ENCODE measurements at regions of chr15 and their contacts with region 1.

Region 1: GRCh38 chr15:67863442-67863987 is 23.7 kb upstream of the RNU6-1 start:
- DNase-seq: peak; percentile 90
- H3K4me3 ChIP-seq: peak overlapping the region; percentile 40 to 50
- H3K27ac ChIP-seq: no peak overlapping the region
- H3K4me1 ChIP-seq: peaks cover 0 to 2% of the 10 kb centered on the region in 2 experiments; a peak in 1 of 4 replicates
- H3K27me3 ChIP-seq: no peaks in the 10 kb centered on the region
- CTCF ChIP-seq: peak; percentile 87
- EP300 ChIP-seq: no peak
- RAD21 ChIP-seq: peak; percentile 92

Region 2: GRCh38 chr15:67820992-67821783 is 42.3 kb before region 1 on chr15:
- CTCF ChIA-PET with region 1: no interaction called
- POLR2A ChIA-PET with region 1: no interaction called
- DNase-seq: no peak
- H3K4me3 ChIP-seq: no peak overlapping the region
- H3K27ac ChIP-seq: no peak overlapping the region
- H3K4me1 ChIP-seq: peaks cover 0 to 22% of the 10 kb centered on the region in 2 experiments; a peak in 2 of 4 replicates
- H3K27me3 ChIP-seq: peaks cover 36% of the 10 kb centered on the region
- CTCF ChIP-seq: no peak
- EP300 ChIP-seq: no peak
- RAD21 ChIP-seq: no peak

Region 3: DNA sequence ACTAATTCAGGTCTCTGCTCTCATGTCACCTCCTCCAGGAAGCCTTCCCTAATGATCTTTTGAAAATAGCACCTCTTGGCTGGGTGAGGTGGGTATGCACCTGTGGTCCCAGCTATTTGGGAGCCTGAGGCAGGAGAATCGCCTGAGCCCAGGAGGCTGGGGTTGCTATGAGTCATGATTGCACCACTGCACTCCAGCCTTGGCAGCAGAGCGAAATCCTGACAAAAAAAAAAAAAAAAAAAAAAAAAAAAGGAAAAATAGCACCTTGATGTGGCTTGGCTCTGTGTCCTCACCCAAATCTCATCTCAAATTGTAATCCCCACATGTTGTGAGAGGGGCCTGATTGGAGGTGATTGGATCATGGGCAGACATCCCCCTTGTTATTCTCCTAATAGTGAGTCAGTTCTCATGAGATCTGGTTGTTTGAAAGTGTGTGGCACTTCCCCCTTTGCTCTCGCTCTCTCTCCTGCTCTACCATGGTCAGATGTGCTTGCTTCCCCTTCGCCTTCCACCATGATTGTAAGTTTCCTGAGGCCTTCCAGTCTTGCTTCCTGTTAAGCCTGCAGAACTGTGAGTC is 12.4 kb before region 1 on chr15:
- CTCF ChIA-PET with region 1: interaction called, 31 read pairs
- POLR2A ChIA-PET with region 1: no interaction called
- DNase-seq: no peak
- H3K4me3 ChIP-seq: no peak overlapping the region
- H3K27ac ChIP-seq: no peak overlapping the region
- H3K4me1 ChIP-seq: peaks cover 0 to 6% of the 10 kb centered on the region in 2 experiments; a peak in 1 of 4 replicates
- H3K27me3 ChIP-seq: no peaks in the 10 kb centered on the region
- CTCF ChIP-seq: no peak
- EP300 ChIP-seq: no peak
- RAD21 ChIP-seq: no peak

Region 4: DNA sequence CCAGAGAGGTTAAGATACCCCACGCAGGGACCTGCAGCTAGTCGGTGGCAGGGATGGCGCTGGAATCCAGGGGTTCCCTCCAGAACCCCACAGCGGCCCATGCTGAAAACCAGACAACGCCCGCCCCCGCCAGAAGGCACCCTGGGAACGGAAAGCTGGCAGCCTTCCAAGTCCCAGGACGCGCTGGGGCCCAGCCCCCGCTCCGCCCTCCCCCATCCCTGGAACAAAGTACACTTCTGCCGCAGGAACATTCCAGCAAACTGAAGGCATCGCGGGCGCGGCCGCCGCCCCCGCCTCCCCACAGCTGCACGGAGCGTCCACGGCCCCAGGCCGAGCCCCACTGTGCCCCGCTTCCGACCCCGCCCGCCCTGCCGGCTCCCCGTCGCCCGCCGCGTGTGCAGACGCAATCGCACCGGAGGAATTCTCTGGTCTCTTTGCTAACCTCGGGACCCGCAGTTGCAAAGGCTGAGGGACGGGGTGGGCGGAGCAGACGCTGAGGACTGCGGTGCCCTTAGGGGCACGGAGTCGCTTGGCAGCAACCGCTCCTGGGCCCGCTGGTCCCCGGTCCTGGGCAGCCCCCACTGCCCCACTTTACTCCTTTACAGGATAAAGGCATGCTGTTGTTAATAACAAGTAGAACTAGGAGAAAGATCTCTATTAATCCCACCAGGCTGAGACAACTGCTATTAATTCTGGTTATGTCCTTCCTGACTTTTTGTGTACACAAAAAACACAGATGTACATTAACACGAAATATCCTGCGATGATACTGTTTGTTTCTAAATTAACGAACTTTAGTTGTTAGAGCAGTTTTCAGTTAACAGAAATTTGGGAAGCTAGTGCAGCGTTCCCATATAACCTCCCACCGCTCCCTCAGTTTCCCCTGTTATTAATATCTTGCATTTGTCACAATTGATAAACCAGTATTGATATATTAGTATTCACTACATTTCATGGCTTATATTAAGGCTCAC is 21.3 kb after region 1 on chr15:
- CTCF ChIA-PET with region 1: interaction called, 14 read pairs
- POLR2A ChIA-PET with region 1: interaction called, 3 read pairs
- DNase-seq: peak; percentile 88
- H3K4me3 ChIP-seq: peak overlapping the region; percentile 45 to 51
- H3K27ac ChIP-seq: peak overlapping the region in 1 of 2 experiments; percentile 80; a peak in 2 of 4 replicates
- H3K4me1 ChIP-seq: peaks cover 0 to 6% of the 10 kb centered on the region in 2 experiments; a peak in 2 of 4 replicates
- H3K27me3 ChIP-seq: no peaks in the 10 kb centered on the region; the same call in 1 of the 2 replicates
- CTCF ChIP-seq: no peak
- EP300 ChIP-seq: peak in 1 of 2 experiments; percentile 36; a peak in 1 of 4 replicates
- RAD21 ChIP-seq: no peak

Region 5: DNA sequence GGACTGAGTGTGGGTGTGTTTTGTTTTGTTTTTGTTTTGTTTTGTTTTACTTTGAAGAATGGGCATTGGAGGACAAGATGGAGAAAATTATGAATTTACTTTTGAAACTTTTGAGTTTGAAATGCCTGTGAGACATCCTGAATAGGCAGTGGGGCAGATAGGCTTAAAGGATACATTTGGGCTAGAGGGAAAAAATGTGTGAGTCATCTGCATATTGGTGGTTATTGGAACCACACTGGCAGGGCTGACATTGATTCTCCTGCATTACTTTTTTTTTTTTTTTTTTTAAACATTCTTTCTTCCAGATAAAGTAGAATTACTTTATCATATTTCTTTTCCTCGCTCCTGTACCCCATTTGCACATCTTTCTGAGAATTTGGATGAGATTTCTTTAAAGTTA is 285.5 kb after region 1 on chr15:
- CTCF ChIA-PET with region 1: interaction called, 73 read pairs
- POLR2A ChIA-PET with region 1: no interaction called
- DNase-seq: no peak
- H3K4me3 ChIP-seq: no peak overlapping the region
- H3K27ac ChIP-seq: peak overlapping the region in 1 of 2 experiments; percentile 34; a peak in 1 of 4 replicates
- H3K4me1 ChIP-seq: peaks cover 0 to 7% of the 10 kb centered on the region in 2 experiments; a peak in 1 of 4 replicates
- H3K27me3 ChIP-seq: no peaks in the 10 kb centered on the region
- CTCF ChIP-seq: no peak
- EP300 ChIP-seq: no peak
- RAD21 ChIP-seq: no peak

Region 6: GRCh38 chr15:68186671-68187397 is 323.3 kb after region 1 on chr15:
- CTCF ChIA-PET with region 1: interaction called, 12 read pairs
- POLR2A ChIA-PET with region 1: no interaction called
- DNase-seq: no peak
- H3K4me3 ChIP-seq: no peak overlapping the region; a peak in 1 of 4 replicates
- H3K27ac ChIP-seq: peak overlapping the region; percentile 72 to 94
- H3K4me1 ChIP-seq: peaks cover 20 to 24% of the 10 kb centered on the region in 2 experiments
- H3K27me3 ChIP-seq: no peaks in the 10 kb centered on the region
- CTCF ChIP-seq: no peak
- EP300 ChIP-seq: no peak
- RAD21 ChIP-seq: no peak

Region 7: GRCh38 chr15:68218847-68219798 is 355.6 kb after region 1 on chr15:
- CTCF ChIA-PET with region 1: interaction called, 10 read pairs
- POLR2A ChIA-PET with region 1: no interaction called
- DNase-seq: peak; percentile 10
- H3K4me3 ChIP-seq: no peak overlapping the region
- H3K27ac ChIP-seq: no peak overlapping the region
- H3K4me1 ChIP-seq: no peaks in the 10 kb centered on the region
- H3K27me3 ChIP-seq: no peaks in the 10 kb centered on the region
- CTCF ChIP-seq: no peak
- EP300 ChIP-seq: no peak
- RAD21 ChIP-seq: no peak